ENCODE measurements at regions of chr17 and their contacts with region 1.

Region 1: DNA sequence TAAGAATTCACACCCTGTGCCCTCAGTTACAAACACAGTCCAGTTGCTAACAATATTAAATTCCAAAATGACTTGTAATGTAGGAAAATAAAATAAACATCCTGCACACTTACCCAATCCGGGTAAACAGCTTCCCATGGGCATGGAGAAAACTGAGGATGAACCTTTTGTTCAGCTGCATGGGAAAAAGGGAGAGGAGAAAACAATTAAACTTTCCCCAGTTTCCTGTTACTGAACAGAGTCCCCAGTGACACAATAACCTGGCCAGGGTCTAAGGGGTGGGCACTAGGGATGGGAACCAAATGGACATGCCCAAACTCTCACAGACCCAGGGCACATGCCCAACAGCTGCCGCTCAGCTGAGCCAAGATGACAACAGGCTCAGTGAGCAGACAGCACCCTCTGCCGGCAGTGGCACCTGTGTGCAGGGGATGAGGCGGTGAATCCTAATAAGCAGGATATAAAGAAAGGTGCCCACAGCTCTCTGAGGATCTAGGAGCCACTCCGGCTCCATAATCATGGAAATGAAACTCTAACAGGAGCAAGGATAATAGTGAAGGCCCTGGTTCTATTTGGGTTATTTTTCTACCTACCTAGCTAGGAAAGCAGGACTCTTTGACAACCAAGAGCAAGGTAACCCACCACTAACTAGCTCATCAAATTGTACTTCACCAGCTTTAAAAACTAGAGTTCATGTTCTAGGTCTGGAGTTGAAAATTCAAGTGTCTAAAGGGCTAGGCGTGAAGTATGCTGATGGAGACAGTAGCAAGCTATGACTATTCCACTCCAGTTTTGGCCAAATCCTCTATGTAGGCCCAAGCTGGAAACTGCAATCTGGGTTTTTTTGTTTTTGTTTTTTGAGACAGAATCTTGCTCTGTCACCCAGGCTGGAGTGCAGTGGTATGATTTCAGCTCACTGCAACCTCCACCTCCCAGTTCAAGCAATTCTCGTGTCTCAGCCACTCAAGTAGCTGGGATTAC is 58.8 kb downstream of the SMG6 start:
- DNase-seq: peak; percentile 71 to 78
- H3K4me3 ChIP-seq: no peak overlapping the region
- H3K4me3 Mint-ChIP-seq: no peak overlapping the region
- H3K27ac Mint-ChIP-seq: no peak overlapping the region
- H3K4me1 ChIP-seq: no peaks in the 10 kb centered on the region
- H3K4me1 Mint-ChIP-seq: no peaks in the 10 kb centered on the region
- H3K27me3 ChIP-seq: no peaks in the 10 kb centered on the region
- H3K27me3 Mint-ChIP-seq: no peaks in the 10 kb centered on the region
- CTCF ChIP-seq: peak; percentile 93 to 96

Region 2: GRCh38 chr17:2094891-2095535 is 149.8 kb before region 1 on chr17:
- CTCF ChIA-PET with region 1: interaction called, 12 read pairs
- POLR2A ChIA-PET with region 1: no interaction called
- intact Hi-C with region 1: loop called (anchors 10 kb)
- DNase-seq: peak in 1 of 2 experiments; percentile 50
- H3K4me3 ChIP-seq: no peak overlapping the region
- H3K4me3 Mint-ChIP-seq: no peak overlapping the region
- H3K27ac Mint-ChIP-seq: no peak overlapping the region
- H3K4me1 ChIP-seq: no peaks in the 10 kb centered on the region
- H3K4me1 Mint-ChIP-seq: peaks cover 6% of the 10 kb centered on the region
- H3K27me3 ChIP-seq: no peaks in the 10 kb centered on the region
- H3K27me3 Mint-ChIP-seq: no peaks in the 10 kb centered on the region
- CTCF ChIP-seq: peak; percentile 24 to 84

Region 3: DNA sequence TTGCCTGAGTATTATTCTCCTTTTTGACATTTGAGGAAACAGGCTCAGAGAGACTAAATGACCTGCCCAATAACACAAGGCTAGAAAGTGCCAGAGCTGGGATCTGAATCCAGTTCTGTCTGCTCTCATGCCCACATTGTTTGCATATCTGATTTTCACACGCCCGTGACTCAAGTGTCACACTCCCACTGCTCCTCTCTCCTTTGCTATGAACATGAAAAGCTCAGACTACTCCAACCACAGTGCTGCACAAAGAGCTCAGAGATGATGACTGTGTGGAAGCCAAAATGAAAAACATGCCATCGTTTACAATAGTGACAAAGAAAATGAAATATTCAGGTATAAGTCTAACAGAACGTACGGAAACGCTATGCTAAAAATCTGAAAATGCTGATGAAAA is 49.1 kb before region 1 on chr17:
- CTCF ChIA-PET with region 1: no interaction called
- POLR2A ChIA-PET with region 1: no interaction called
- intact Hi-C with region 1: no loop called
- DNase-seq: no peak
- H3K4me3 ChIP-seq: no peak overlapping the region
- H3K4me3 Mint-ChIP-seq: no peak overlapping the region
- H3K27ac Mint-ChIP-seq: no peak overlapping the region
- H3K4me1 ChIP-seq: no peaks in the 10 kb centered on the region
- H3K4me1 Mint-ChIP-seq: no peaks in the 10 kb centered on the region
- H3K27me3 ChIP-seq: no peaks in the 10 kb centered on the region
- H3K27me3 Mint-ChIP-seq: no peaks in the 10 kb centered on the region
- CTCF ChIP-seq: no peak

Measured in Caco-2 (cell line).